HCT116 (cell line): ENCODE measurements at regions of chr1 and their contacts with region 1.

Region 1: DNA sequence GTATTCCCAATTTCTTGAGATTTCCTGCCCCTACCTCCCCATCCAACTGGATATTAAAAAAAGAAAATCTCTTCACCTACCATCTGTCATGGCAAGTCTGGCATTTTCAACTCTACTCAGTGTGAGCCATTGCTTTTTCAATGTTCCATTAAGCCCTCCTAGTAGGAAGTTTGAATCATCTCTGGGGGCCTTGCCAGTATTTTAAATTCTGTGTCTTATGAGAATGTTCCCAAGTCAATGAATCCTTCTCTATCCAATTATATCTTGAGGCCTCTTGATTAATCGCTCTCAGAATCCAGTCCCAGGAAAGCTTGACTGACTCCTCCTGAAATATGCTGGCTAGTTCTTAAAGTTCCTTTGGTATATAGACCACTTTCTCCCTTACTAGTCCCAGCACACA is 91.5 kb downstream of the NGF start:
- DNase-seq: no peak
- ATAC-seq: no peak
- H3K4me3 ChIP-seq: no peak overlapping the region
- H3K27ac ChIP-seq: no peak overlapping the region
- H3K4me1 ChIP-seq: no peaks in the 10 kb centered on the region
- H3K27me3 ChIP-seq: no peaks in the 10 kb centered on the region
- CTCF ChIP-seq: no peak
- POLR2A ChIP-seq: no peak
- RAD21 ChIP-seq: no peak

Region 2: GRCh38 chr1:114310695-114311271 is 935.7 kb before region 1 on chr1:
- CTCF ChIA-PET with region 1: no interaction called
- POLR2A ChIA-PET with region 1: no interaction called
- RAD21 ChIA-PET with region 1: no interaction called
- intact Hi-C with region 1: loop called (anchors 5 kb)
- DNase-seq: no peak
- ATAC-seq: no peak
- H3K4me3 ChIP-seq: no peak overlapping the region
- H3K27ac ChIP-seq: no peak overlapping the region
- H3K4me1 ChIP-seq: no peaks in the 10 kb centered on the region
- H3K27me3 ChIP-seq: no peaks in the 10 kb centered on the region
- CTCF ChIP-seq: no peak
- POLR2A ChIP-seq: no peak
- RAD21 ChIP-seq: no peak

Region 3: GRCh38 chr1:115426231-115426771 is 179.8 kb after region 1 on chr1:
- CTCF ChIA-PET with region 1: no interaction called
- POLR2A ChIA-PET with region 1: no interaction called
- RAD21 ChIA-PET with region 1: no interaction called
- intact Hi-C with region 1: no loop called
- DNase-seq: no peak
- ATAC-seq: no peak
- H3K4me3 ChIP-seq: no peak overlapping the region
- H3K27ac ChIP-seq: no peak overlapping the region
- H3K4me1 ChIP-seq: peaks cover 0 to 36% of the 10 kb centered on the region in 2 experiments; a peak in 2 of 4 replicates
- H3K27me3 ChIP-seq: no peaks in the 10 kb centered on the region
- CTCF ChIP-seq: no peak
- POLR2A ChIP-seq: no peak
- RAD21 ChIP-seq: no peak